Activated CD8-positive, alpha-beta memory T cell treated with anti-CD3 and anti-CD28 coated beads, Interleukin-2, amount 10 ng/mL, durations not matched to agents 7 days and 5 days (primary cell): ENCODE measurements at regions of chr5 and their contacts with region 1.

Region 1: DNA sequence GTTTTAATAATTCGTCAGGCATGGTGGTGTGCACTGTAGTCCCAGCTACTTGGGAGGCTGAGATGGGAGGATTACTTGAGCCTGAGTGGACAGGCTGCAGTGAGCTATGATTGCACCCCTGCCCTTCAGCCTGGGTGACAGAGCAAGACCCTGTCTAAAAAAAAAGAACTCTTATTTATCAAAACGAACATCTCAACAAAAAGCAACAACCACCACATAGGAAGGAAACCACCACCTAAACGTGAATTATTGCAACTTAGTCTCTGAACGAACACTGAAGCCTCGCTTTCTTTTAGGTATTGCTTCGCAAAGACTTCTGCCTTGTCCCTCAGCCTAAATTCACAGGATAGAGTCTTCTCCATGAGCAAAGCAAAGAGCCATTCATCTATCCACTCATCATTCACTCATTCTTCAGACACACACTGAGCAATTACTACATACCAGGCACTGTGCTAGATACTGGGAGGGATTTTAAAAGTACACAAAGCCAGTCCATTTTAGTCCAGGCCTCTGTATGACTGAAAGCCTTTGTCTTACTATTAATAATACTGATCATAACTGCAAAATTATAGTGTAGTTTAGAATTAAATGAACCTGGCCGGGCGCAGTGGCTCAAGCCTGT is 57.4 kb downstream of the THBS4 start:
- DNase-seq: no peak
- ATAC-seq: no peak
- H3K4me3 Mint-ChIP-seq: no peak overlapping the region
- H3K27ac Mint-ChIP-seq: peak overlapping the region; percentile 64
- H3K4me1 Mint-ChIP-seq: peaks cover 14% of the 10 kb centered on the region
- H3K27me3 Mint-ChIP-seq: no peaks in the 10 kb centered on the region

Region 2: DNA sequence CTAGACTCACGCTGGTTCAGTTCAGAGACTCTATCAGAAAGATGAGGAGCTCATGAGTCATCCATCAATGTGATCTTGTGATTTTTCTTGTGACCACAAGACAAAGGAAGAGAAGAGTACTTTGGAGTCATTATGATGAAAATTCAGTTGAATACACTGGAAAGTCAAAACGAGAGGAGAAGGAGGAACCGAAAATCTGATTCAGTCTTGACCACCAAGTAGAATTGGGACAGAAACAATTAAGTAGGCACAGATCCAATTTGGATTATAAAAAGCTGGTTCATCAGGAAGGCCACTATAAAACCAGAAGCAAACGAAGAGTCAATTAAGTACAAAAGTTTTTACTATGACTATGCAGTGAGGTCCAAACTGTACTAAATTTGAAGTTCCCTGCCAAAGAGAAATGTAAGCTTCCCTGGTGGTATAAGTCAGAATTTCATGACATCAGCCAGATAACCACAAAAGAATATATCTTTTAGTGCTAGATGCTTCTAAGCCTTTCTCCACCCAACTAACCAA is 33.4 kb after region 1 on chr5:
- CTCF ChIA-PET with region 1: interaction called, 15 read pairs
- DNase-seq: peak; percentile 44
- ATAC-seq: peak; percentile 89
- H3K4me3 Mint-ChIP-seq: peak overlapping the region; percentile 37
- H3K27ac Mint-ChIP-seq: peak overlapping the region; percentile 77
- H3K4me1 Mint-ChIP-seq: peaks cover 32% of the 10 kb centered on the region
- H3K27me3 Mint-ChIP-seq: no peaks in the 10 kb centered on the region

Region 3: DNA sequence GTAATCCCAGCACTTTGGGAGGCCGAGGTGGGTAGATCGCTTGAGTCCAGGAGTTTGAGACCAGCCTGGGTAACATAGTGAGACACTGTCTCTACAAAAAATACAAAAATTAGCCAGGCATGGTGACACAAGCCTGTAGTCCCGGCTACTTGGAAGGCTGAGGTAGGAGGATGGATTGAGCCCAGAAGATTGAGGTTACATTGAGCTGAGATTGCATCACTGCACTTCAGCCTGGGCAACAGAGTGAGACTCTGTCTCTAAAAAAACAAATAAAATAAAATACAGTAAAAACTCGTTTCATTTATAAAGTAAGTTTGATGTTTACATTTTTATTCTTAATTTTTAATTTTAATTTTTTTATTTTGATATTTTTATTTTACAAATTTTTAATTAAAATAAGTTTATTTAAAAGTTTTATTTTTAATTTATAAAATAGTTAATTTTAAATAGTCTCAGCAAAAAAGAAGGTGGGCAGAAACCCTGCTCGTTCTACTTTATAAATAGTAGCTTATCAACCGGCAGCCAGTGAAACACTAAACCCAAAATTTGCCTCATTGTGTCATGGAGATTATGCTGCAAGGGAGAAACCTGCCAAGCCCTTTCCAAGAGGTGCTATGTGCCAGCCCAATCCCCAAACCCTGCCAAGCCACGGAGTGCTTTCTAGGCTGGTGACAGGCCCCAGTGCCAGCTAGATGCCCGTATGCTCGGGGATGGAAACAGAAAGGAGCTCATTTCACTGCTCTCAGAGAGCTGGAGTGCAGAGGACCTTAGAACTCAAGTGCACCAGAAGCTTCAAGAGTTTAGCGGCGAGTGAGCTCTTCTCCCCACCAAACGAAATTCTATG is 124.4 kb after region 1 on chr5:
- CTCF ChIA-PET with region 1: interaction called, 13 read pairs
- DNase-seq: peak; percentile 66
- ATAC-seq: peak; percentile 34
- H3K4me3 Mint-ChIP-seq: peak overlapping the region; percentile 77
- H3K27ac Mint-ChIP-seq: peak overlapping the region; percentile 88
- H3K4me1 Mint-ChIP-seq: peaks cover 71% of the 10 kb centered on the region
- H3K27me3 Mint-ChIP-seq: no peaks in the 10 kb centered on the region

Region 4: DNA sequence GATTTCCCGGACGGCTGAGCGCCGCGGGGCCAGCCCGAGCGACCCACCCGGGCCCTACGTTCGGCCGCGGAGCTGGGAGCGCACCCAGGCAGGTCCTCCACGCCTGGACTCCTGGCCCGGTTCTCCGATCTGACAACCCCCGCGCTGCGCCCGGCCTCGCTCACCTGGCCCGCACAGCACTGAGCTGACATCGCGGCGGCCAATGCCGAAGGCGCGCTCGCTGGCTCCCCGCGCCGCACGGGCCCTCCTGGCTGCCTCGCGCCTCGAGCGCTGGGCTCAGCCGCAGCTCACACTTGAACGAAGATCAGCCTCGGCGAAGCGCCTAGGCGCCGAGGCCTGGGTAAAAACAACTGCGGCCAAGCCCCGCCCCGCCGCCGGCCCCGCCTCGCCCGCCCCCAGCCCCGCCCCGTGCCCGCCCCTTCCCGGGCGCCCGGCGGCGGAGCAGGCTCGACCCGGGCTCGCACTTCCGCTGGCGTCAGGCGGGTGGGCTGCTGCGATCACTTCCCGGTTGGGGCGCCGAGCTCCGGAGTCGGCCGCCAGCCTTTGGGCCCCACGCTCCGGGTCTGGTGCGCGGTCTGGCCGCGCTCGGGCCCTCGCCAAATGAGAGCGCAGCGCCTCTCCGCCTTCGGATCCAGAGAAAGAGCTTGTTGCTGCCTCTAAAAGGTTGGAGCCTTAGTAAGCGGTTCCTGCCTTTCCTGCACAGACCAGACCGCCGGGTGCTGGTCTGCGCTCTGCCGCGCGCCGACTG is 163.3 kb after region 1 on chr5 and contains the start of gene SERINC5:
- CTCF ChIA-PET with region 1: interaction called, 23 read pairs
- DNase-seq: peak; percentile 90
- ATAC-seq: peak; percentile 79
- H3K4me3 Mint-ChIP-seq: peak within 1 kb of the TSS; percentile 94
- H3K27ac Mint-ChIP-seq: peak within 1 kb of the TSS; percentile 94
- H3K4me1 Mint-ChIP-seq: peaks cover 53% of the 10 kb centered on the region
- H3K27me3 Mint-ChIP-seq: no peaks in the 10 kb centered on the region
- total RNA-seq, gene SERINC5: 26.8 to 38.0 TPM

Region 5: DNA sequence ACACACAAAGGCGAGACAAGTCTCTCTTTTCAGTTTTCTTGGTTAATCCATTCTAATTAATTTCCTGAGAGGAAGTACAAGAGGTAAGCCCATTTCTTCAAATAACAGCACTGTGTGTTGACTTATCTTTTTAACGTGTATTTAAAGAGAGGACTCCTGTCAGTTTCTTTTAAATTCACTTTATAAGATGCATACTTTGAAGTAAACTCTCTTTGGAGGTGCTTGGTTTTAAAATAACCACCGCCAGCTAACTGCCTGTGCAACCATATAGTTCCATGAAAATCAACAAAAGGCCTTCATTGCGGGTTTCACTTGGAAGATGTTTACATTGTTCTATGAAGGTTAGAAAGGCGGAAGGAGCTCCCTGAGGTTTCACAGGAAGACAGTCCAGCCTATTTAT is 176.3 kb after region 1 on chr5:
- CTCF ChIA-PET with region 1: interaction called, 39 read pairs
- DNase-seq: no peak
- ATAC-seq: no peak
- H3K4me3 Mint-ChIP-seq: no peak overlapping the region
- H3K27ac Mint-ChIP-seq: peak overlapping the region; percentile 77
- H3K4me1 Mint-ChIP-seq: peaks cover 27% of the 10 kb centered on the region
- H3K27me3 Mint-ChIP-seq: no peaks in the 10 kb centered on the region

Region 6: DNA sequence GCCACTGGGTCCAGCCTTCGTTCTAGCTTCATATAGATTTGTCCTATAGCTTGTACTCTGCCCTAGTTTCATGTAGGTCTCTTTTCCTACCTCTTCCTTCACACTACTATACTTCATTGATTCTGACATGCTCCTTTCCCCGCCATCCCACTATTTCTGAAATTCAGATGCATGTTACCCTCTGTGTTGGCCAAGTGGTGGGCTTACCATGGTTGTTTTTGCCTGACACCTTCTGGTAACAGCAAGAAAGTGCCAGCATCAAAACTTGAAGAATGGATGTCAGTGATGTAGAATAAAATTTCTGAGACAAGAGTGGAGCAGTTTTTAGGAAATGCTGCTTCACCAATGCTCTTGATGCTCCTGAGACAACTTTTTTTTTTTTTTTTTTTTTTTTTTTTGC is 182.8 kb after region 1 on chr5:
- CTCF ChIA-PET with region 1: interaction called, 39 read pairs
- DNase-seq: no peak
- ATAC-seq: peak; percentile 49
- H3K4me3 Mint-ChIP-seq: no peak overlapping the region
- H3K27ac Mint-ChIP-seq: no peak overlapping the region
- H3K4me1 Mint-ChIP-seq: peaks cover 11% of the 10 kb centered on the region
- H3K27me3 Mint-ChIP-seq: no peaks in the 10 kb centered on the region

Region 7: GRCh38 chr5:80296121-80296520 is 203.5 kb after region 1 on chr5:
- CTCF ChIA-PET with region 1: no interaction called
- DNase-seq: no peak
- ATAC-seq: no peak
- H3K4me3 Mint-ChIP-seq: no peak overlapping the region
- H3K27ac Mint-ChIP-seq: no peak overlapping the region
- H3K4me1 Mint-ChIP-seq: no peaks in the 10 kb centered on the region
- H3K27me3 Mint-ChIP-seq: no peaks in the 10 kb centered on the region

Region 8: DNA sequence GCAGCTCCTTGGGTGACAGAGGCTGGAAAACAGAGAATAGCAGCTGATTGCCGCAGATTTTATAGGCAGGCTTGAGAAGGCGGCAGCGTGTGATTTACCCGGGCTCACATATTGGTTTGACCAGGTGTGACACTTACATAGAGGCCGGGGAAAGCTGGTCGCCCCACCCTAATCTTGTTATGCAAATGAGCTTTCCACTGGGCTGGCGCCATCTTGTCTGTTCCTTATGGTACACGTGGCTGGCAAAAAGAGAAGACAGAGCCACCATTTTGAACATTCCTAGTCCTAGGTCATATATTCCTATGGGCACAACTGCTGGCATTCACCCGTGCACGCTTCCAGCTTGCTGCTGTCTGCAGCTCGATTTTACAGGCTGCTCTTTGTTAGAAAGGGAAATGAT is 215.9 kb after region 1 on chr5:
- CTCF ChIA-PET with region 1: interaction called, 107 read pairs
- DNase-seq: no peak
- ATAC-seq: no peak
- H3K4me3 Mint-ChIP-seq: no peak overlapping the region
- H3K27ac Mint-ChIP-seq: no peak overlapping the region
- H3K4me1 Mint-ChIP-seq: no peaks in the 10 kb centered on the region
- H3K27me3 Mint-ChIP-seq: no peaks in the 10 kb centered on the region